Astrocyte of the cerebellum (primary cell): ENCODE measurements at regions of chr19 and their contacts with region 1.

Region 1: DNA sequence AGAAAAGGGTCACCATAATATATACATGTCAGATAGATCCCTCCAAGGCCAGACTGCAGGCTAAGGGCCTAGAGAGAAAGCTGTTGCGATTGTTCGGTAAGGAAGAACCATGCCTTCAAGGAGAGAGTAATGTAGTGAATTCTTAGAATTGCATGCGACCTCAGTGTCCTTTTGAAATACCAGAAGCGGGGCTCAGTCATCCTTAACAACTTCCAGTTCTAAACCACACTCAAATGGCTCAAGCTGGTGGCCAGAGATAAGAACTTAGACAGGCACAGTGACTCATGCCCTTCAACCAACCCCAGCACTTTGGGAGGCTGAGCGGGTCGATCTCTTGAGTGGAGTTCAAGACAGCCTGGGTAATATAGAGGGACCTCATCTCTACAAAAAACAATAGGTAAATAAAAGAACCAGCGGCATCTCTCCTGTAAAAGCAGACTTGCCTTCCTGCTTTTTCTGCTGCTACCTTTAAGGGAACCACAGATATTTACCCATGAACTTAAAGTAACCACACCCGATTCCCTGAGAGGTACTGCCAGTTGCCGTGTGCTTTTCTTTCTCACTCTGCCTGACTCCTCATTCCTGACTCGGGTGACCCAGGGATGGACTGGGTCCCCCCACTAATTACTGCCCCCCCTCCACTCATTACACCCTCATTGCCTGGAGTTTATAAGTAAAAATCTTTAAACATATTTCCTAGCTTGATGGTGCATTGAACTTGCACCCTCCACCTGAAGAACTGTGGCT is 15.4 kb upstream of the SIGLEC6 start:
- DNase-seq: no peak
- H3K4me3 ChIP-seq: no peak overlapping the region
- CTCF ChIP-seq: no peak

Region 2: DNA sequence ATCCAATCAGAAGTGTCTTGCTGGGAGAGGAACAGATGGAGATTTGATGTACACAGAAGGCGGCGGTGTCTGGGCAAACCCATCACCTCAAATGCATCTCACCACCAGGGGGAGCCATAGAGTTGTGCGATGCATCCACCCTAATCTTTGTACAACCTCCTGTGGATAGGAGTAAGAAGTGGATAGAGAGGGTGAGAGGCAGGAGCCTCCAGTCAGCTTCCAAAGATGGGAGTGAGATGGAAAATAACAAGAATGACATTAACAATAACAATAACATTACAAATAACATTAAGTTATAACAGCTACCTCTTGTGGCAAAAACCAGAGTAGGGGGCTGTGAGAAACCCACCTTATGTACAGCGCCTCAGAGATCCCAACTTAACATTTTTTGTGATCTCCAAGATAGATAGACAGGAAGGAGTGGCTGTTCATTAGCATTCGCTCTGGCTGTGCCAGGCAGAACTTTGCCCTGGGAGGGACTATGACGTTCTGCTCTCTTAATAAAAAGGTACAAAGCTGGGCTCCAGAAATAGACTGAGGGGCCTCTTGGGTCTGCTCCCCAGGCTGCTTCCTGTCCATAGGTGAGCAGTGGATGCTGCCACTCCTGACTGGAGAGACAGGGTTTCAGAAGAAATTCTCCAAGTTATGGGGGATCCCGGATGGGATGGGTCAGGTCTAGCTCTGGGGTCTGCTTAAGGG is 73.7 kb before region 1 on chr19:
- in situ Hi-C with region 1: loop called (anchors 5 kb)
- DNase-seq: peak; percentile 12
- H3K4me3 ChIP-seq: no peak overlapping the region
- CTCF ChIP-seq: peak; percentile 67